ENCODE measurements at regions of chr19 and their contacts with region 1.

Region 1: DNA sequence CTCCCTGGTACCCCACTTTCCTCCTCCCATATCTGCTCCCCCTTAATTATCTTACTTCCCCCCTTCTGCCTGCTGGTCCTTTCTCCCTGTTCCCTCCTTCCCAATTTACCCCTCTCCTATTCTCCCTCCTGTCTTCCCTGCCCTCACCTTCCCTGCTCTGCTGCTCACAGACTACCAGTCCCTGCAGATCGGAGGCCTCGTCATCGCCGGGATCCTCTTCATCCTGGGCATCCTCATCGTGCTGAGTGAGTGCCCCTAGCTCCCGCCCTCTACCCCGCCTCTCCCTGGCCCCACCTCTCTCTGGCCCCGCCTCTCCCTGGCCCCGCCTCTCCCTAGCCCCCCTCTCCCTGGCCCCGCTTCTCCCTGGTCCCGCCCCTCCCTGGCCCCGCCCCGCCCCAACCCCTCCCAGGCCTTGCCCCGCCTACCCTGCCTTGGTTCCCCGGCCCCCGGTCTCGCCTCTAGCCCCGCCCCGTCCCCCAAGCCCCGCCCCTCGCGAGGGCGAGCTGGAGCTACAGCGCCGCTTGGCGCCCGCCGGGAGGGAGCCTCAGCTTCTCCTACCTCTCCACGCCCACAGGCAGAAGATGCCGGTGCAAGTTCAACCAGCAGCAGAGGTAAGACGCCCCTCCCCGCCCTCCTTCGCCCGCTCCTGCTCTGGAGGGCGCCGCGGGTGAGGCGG is 2.0 kb upstream of the FXYD7 start:
- DNase-seq: peak; percentile 77 to 95
- H3K4me3 ChIP-seq: no peak overlapping the region; the same call in 1 of the 2 replicates
- H3K27ac ChIP-seq: no peak overlapping the region
- H3K4me1 ChIP-seq: peaks cover 20% of the 10 kb centered on the region
- H3K27me3 ChIP-seq: no peaks in the 10 kb centered on the region
- CTCF ChIP-seq: peak; percentile 54; the same call in 1 of the 2 replicates

Region 2: DNA sequence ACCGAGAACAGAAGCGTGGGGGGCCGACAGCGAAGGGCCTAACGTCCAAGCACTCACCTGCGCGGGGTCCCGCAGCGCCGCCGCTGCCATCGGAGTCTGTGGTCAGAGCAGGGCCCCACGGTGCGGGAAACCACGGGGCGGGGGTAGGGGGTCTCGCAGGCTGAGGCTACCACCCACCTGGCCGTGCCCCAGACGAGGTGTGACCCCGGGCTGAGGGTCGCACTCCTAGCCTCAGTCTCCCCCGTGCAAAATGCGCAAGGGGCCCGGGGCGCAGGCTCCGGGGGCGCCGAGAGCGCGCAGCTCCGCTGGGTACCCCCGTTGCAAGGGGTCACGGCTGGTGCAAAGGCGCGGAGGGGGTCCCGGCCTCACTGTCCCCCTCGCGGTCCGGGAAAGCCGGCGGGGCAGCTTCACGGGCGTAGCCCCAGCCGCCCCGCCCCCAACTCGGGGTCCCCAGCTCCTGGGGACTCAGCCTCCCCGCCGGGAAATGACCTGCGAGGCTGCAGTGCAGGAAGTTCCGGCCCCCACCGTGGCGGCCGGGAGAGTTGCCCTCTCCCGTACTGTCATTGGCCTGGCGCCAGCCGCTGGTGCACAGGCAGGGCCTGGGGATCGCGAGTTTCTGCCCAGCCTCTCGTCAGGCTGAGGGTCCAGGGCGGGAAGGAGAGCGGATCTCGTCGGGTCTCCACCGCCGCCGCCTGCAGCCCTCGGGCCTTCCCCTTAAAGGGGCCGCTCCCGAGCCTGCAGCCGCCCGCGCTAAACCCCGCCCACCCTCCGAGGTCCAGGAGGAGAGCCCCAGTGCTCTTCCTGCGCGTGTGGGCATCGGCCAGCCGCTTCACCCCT is 177.3 kb before region 1 on chr19 and contains the start of gene ZNF792:
- CTCF ChIA-PET with region 1: no interaction called
- POLR2A ChIA-PET with region 1: no interaction called
- intact Hi-C with region 1: no loop called
- DNase-seq: peak in 1 of 2 experiments; percentile 47
- H3K4me3 ChIP-seq: peak within 1 kb of the TSS; percentile 86
- H3K27ac ChIP-seq: no peak within 1 kb of the TSS
- H3K4me1 ChIP-seq: peaks cover 15% of the 10 kb centered on the region; the same call in 1 of the 2 replicates
- H3K27me3 ChIP-seq: peaks cover 19% of the 10 kb centered on the region
- CTCF ChIP-seq: no peak
- total RNA-seq, gene ZNF792: 3.5 and 4.1 TPM in 2 replicates

Region 3: GRCh38 chr19:35006342-35007018 is 134.6 kb before region 1 on chr19:
- CTCF ChIA-PET with region 1: interaction called, 5 read pairs
- POLR2A ChIA-PET with region 1: interaction called, 13 read pairs
- intact Hi-C with region 1: no loop called
- DNase-seq: peak; percentile 87 to 99
- H3K4me3 ChIP-seq: peak overlapping the region; percentile 24; the same call in 1 of the 2 replicates
- H3K27ac ChIP-seq: peak overlapping the region; percentile 69
- H3K4me1 ChIP-seq: peaks cover 44% of the 10 kb centered on the region
- H3K27me3 ChIP-seq: no peaks in the 10 kb centered on the region
- CTCF ChIP-seq: no peak

Region 4: GRCh38 chr19:35066691-35067563 is 74.2 kb before region 1 on chr19:
- CTCF ChIA-PET with region 1: interaction called, 23 read pairs
- POLR2A ChIA-PET with region 1: interaction called, 5 read pairs
- intact Hi-C with region 1: loop called (anchors 1 kb)
- DNase-seq: peak; percentile 78 to 85
- H3K4me3 ChIP-seq: no peak overlapping the region
- H3K27ac ChIP-seq: no peak overlapping the region
- H3K4me1 ChIP-seq: peaks cover 23% of the 10 kb centered on the region
- H3K27me3 ChIP-seq: no peaks in the 10 kb centered on the region
- CTCF ChIP-seq: peak; percentile 96

Region 5: DNA sequence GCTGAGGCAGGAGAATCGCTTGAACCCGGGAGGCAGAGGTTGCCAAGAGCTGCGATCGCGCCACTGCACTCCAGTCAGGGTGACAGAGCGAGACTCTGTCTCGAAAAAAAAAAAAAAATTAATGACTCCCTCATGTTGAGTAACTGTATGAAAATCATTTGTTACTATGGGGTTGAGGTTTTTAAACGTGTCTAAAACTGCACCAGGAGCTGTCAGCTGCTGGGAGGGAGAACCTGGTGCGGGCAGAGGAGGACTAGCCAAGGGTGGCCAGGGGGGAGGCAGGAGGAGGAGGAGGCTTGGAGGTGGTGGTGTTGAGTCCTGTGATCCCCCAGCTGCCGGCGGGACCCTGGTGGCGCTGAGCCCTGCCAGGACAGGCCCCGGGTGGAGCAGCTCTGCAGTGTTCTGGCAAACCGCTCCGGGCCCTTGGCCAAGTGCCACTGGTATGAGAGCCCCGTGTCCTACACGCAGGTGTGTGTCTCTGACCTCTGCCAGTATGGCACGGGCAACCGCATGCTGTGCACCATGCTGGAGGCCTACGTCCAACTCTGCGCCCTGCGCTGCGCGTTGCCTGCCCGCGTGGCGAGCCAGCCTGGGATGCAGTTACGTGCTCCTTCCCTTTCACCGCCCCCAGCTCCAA is 42.6 kb before region 1 on chr19:
- CTCF ChIA-PET with region 1: no interaction called
- POLR2A ChIA-PET with region 1: no interaction called
- intact Hi-C with region 1: no loop called
- DNase-seq: no peak
- H3K4me3 ChIP-seq: no peak overlapping the region
- H3K27ac ChIP-seq: no peak overlapping the region
- H3K4me1 ChIP-seq: no peaks in the 10 kb centered on the region
- H3K27me3 ChIP-seq: no peaks in the 10 kb centered on the region
- CTCF ChIP-seq: no peak

Region 6: GRCh38 chr19:35154525-35155406 is 13.7 kb after region 1 on chr19 and contains the start of gene FXYD5:
- CTCF ChIA-PET with region 1: interaction called, 15 read pairs
- POLR2A ChIA-PET with region 1: interaction called, 13 read pairs
- intact Hi-C with region 1: no loop called
- DNase-seq: peak; percentile 63 to 65
- H3K4me3 ChIP-seq: peak within 1 kb of the TSS; percentile 71
- H3K27ac ChIP-seq: peak within 1 kb of the TSS; percentile 66
- H3K4me1 ChIP-seq: peaks cover 32% of the 10 kb centered on the region
- H3K27me3 ChIP-seq: no peaks in the 10 kb centered on the region
- CTCF ChIP-seq: no peak
- total RNA-seq, gene FXYD5: 137 and 181 TPM in 2 replicates

Region 7: DNA sequence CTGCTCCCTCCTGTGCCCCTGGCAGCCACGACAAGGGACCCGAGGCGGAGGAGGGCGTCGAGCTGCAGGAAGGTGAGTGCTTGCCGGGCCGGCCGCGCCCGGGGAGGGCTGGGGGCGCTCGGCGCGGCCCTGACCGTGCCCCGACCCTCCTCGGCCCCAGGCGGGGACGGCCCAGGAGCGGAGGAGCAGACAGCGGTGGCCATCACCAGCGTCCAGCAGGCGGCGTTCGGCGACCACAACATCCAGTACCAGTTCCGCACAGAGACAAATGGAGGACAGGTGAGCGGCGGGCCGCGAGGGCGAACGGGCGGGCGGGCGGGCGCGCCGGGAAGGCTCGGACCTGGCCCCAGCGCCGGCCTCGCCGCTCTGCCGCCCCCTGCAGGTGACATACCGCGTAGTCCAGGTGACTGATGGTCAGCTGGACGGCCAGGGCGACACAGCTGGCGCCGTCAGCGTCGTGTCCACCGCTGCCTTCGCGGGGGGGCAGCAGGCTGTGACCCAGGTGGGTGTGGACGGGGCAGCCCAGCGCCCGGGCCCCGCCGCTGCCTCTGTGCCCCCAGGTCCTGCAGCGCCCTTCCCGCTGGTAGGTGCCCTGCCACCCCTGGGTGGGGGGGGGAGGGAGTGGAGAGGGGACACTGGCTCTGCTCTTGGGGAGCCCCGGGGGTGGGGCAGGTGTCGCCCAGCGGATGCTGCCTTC is 128.5 kb after region 1 on chr19:
- CTCF ChIA-PET with region 1: no interaction called
- POLR2A ChIA-PET with region 1: no interaction called
- intact Hi-C with region 1: loop called (anchors 5 kb)
- DNase-seq: peak; percentile 68 to 93
- H3K4me3 ChIP-seq: peak overlapping the region; percentile 66
- H3K27ac ChIP-seq: peak overlapping the region; percentile 47; the same call in 1 of the 2 replicates
- H3K4me1 ChIP-seq: peaks cover 14% of the 10 kb centered on the region; the same call in 1 of the 2 replicates
- H3K27me3 ChIP-seq: no peaks in the 10 kb centered on the region
- CTCF ChIP-seq: peak; percentile 70

Region 8: GRCh38 chr19:35563207-35563829 is 422.2 kb after region 1 on chr19 and contains the start of gene ATP4A:
- CTCF ChIA-PET with region 1: interaction called, 19 read pairs
- POLR2A ChIA-PET with region 1: no interaction called
- intact Hi-C with region 1: no loop called
- DNase-seq: no peak
- H3K4me3 ChIP-seq: no peak within 1 kb of the TSS
- H3K27ac ChIP-seq: no peak within 1 kb of the TSS
- H3K4me1 ChIP-seq: no peaks in the 10 kb centered on the region
- H3K27me3 ChIP-seq: peaks cover 38% of the 10 kb centered on the region
- CTCF ChIP-seq: no peak
- total RNA-seq, gene ATP4A: not detected in 2 replicates